ENCODE measurements at regions of chr10 and their contacts with region 1.

Region 1: GRCh38 chr10:80163741-80164341 is 31.3 kb downstream of the PLAC9 start:
- DNase-seq: peak; percentile 63
- H3K4me3 ChIP-seq: no peak overlapping the region
- H3K27me3 ChIP-seq: no peaks in the 10 kb centered on the region
- CTCF ChIP-seq: no peak

Region 2: GRCh38 chr10:80177781-80178540 is 14.1 kb after region 1 on chr10:
- CTCF ChIA-PET with region 1: interaction called, 15 read pairs
- POLR2A ChIA-PET with region 1: no interaction called
- DNase-seq: no peak
- H3K4me3 ChIP-seq: no peak overlapping the region
- H3K27me3 ChIP-seq: no peaks in the 10 kb centered on the region
- CTCF ChIP-seq: no peak

Region 3: GRCh38 chr10:80292607-80293239 is 128.9 kb after region 1 on chr10:
- CTCF ChIA-PET with region 1: no interaction called
- POLR2A ChIA-PET with region 1: no interaction called
- DNase-seq: no peak
- H3K4me3 ChIP-seq: no peak overlapping the region
- H3K27me3 ChIP-seq: no peaks in the 10 kb centered on the region; the same call in 1 of the 2 replicates
- CTCF ChIP-seq: no peak

Region 4: DNA sequence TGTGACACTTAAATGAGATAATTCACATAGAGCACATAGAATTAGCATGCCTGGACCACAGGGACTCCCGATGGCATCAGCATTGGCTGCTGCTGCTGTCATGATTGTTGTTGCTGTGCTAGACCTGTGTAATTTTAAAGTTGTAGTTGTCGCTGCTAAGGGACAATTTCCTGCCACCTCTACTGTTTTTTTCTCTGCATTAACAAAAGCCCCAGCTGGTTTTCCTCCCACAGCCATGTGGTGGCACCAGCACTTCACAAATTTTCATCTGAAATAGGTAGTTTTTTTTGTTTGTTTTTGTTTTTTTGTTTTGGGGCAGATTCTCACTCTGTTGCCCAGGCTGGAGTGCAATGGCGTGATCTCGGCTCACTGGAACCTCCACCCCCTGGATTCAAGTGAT is 219.1 kb after region 1 on chr10:
- CTCF ChIA-PET with region 1: no interaction called
- POLR2A ChIA-PET with region 1: no interaction called
- DNase-seq: no peak
- H3K4me3 ChIP-seq: no peak overlapping the region
- H3K27me3 ChIP-seq: no peaks in the 10 kb centered on the region
- CTCF ChIP-seq: peak; percentile 64

Measured in BJ (cell line).